Breast epithelium (tissue), 4 donors: ENCODE measurements at regions of chr2 and their contacts with region 1.

Region 1: GRCh38 chr2:25991965-25992364 is 9.7 kb upstream of the KIF3C start:
- DNase-seq: no peak
- H3K4me3 ChIP-seq: no peak overlapping the region
- H3K27ac ChIP-seq: no peak overlapping the region
- H3K4me1 ChIP-seq: no peaks in the 10 kb centered on the region
- H3K27me3 ChIP-seq: no peaks in the 10 kb centered on the region
- CTCF ChIP-seq: no peak
- POLR2A ChIP-seq: no peak

Region 2: GRCh38 chr2:26144953-26145680 is 153.2 kb after region 1 on chr2:
- intact Hi-C with region 1: loop called (anchors 10 kb)
- DNase-seq: no peak
- H3K4me3 ChIP-seq: peak overlapping the region in 1 of 3 donors; percentile 48
- H3K27ac ChIP-seq: no peak overlapping the region
- H3K4me1 ChIP-seq: peaks cover 0 to 3% of the 10 kb centered on the region in 2 donors
- H3K27me3 ChIP-seq: no peaks in the 10 kb centered on the region
- CTCF ChIP-seq: peak; percentile 76 to 84 (median 81)
- POLR2A ChIP-seq: no peak